MCF 10A (cell line): ENCODE measurements at regions of chr4 and their contacts with region 1.

Region 1: GRCh38 chr4:182307746-182308145 is 64.5 kb downstream of the TENM3 start:
- DNase-seq: peak; percentile 97
- H3K4me3 Mint-ChIP-seq: peak overlapping the region; percentile 31
- H3K27ac Mint-ChIP-seq: peak overlapping the region; percentile 90
- H3K4me1 Mint-ChIP-seq: peaks cover 22% of the 10 kb centered on the region
- H3K27me3 Mint-ChIP-seq: no peaks in the 10 kb centered on the region
- CTCF ChIP-seq: no peak

Region 2: DNA sequence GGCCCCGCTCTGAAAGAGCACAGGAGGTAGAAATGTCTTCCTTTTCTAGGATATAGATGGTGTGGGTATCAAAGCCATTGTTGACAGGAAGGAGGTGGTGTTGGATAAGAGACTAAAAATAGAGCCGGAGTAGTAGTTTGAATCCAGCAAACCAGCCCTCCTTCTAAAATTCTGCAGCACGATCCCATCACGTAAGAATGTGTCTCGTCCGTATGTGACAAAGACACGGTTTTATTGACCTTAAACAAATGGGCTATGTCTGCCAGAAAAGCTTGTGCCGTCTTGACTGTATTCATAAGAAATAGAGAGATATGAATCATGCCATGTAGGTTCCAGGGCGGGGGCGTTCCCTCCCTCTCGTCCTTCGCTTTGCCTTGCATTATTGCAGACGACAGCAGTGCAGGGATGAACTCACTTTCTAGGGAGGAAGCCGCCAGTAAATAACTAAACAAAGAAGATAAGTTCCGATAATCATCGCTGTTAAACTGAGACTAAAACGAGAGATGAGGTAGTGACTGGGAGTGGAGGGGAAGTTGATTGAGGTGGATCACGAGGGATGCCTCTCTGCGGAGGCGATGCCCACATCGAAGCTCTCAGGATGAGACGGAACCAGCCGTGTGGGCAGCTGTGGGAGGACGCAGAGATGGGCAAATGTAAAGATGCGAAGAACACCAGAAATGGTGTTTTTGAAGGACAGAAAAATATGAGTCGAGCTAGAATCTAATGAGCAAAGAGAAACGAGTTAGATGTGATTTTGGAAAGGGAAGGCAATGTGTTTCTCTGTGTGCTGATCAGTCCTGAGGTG is 61.1 kb before region 1 on chr4:
- CTCF ChIA-PET with region 1: interaction called, 4 read pairs
- POLR2A ChIA-PET with region 1: interaction called, 6 read pairs
- intact Hi-C with region 1: loop called (anchors 5 kb)
- DNase-seq: peak; percentile 81
- H3K4me3 Mint-ChIP-seq: peak overlapping the region; percentile 64
- H3K27ac Mint-ChIP-seq: peak overlapping the region; percentile 7
- H3K4me1 Mint-ChIP-seq: peaks cover 32% of the 10 kb centered on the region
- H3K27me3 Mint-ChIP-seq: no peaks in the 10 kb centered on the region
- CTCF ChIP-seq: no peak